ENCODE measurements at regions of chr3 and their contacts with region 1.

Region 1: GRCh38 chr3:78659386-78659987 is 1108.3 kb downstream of the ROBO1 start:
- DNase-seq: peak in 3 of 4 donors; percentile 28 to 48 (median 39)
- ATAC-seq: no peak
- H3K4me3 ChIP-seq: no peak overlapping the region
- H3K27ac ChIP-seq: no peak overlapping the region
- H3K4me1 ChIP-seq: no peaks in the 10 kb centered on the region
- H3K27me3 ChIP-seq: no peaks in the 10 kb centered on the region
- CTCF ChIP-seq: peak; percentile 42 to 66 (median 62)
- POLR2A ChIP-seq: no peak

Region 2: GRCh38 chr3:79019924-79020173 is 360.4 kb after region 1 on chr3:
- intact Hi-C with region 1: loop called (anchors 5 kb)
- DNase-seq: no peak
- ATAC-seq: no peak
- H3K4me3 ChIP-seq: no peak overlapping the region
- H3K27ac ChIP-seq: no peak overlapping the region
- H3K4me1 ChIP-seq: peaks cover 22% of the 10 kb centered on the region
- H3K27me3 ChIP-seq: peaks cover 0 to 15% of the 10 kb centered on the region in 2 donors
- CTCF ChIP-seq: no peak
- POLR2A ChIP-seq: no peak

Region 3: DNA sequence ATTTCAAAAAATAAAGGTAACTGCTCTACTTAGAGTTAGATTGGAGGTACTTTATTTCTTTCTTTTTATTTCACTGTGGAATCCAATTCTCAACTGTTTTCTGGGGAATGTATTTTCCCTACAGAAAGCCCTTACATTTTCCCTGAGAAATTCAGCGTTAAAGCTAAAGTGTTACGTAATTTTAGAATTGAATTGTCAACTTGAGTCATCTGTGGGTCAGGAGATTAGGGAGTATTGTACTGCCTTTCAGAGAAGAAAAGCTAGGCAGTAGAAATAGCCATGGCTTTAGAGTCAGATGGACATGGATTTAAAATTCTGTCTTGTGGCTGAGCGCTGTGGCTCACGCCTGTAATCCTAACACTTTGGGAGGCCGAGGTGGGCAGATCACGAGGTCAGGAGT is 379.7 kb after region 1 on chr3:
- intact Hi-C with region 1: loop called (anchors 5 kb)
- DNase-seq: no peak
- ATAC-seq: no peak
- H3K4me3 ChIP-seq: no peak overlapping the region
- H3K27ac ChIP-seq: no peak overlapping the region
- H3K4me1 ChIP-seq: no peaks in the 10 kb centered on the region
- H3K27me3 ChIP-seq: no peaks in the 10 kb centered on the region
- CTCF ChIP-seq: no peak
- POLR2A ChIP-seq: no peak